HepG2 (cell line): ENCODE measurements at regions of chr11 and their contacts with region 1.

Region 1: DNA sequence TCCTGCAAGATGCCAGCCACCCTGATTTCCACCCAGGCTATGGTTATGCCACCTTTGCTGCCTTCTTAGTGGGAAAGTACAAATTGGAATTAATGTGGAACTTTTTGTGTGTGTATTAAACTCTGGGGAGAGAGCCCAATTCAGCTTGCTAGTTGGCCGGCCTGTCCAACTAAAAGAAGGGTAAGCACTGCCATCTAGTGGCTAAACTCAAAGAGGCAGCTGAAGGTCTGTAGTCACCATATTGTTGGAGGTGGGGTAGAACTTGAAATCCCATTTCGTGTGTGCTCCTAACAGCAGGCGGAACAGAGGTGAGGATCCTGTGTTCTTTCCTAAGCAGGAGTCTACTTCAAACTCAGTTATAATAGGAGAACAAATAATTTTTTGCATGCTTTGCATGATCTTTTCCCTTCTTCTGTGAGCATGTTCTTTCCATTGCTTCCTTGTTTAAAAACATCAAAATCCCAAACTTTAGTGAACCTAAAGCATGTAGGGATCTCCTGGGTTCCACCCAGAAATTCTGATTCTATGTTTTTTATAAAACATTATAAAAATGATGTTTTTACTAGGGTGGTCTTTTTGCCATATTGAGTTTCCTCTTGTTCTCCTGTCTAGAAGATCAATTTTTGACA is 138.8 kb upstream of the SORL1-AS1 start:
- DNase-seq: peak; percentile 59
- ATAC-seq: peak; percentile 82
- H3K4me3 ChIP-seq: no peak overlapping the region
- H3K27ac ChIP-seq: no peak overlapping the region
- H3K4me1 ChIP-seq: no peaks in the 10 kb centered on the region
- H3K27me3 ChIP-seq: no peaks in the 10 kb centered on the region
- CTCF ChIP-seq: peak; percentile 87
- EP300 ChIP-seq: no peak
- POLR2A ChIP-seq: no peak
- RAD21 ChIP-seq: peak; percentile 73

Region 2: GRCh38 chr11:121249039-121249663 is 342.4 kb before region 1 on chr11:
- CTCF ChIA-PET with region 1: interaction called, 10 read pairs
- POLR2A ChIA-PET with region 1: no interaction called
- in situ Hi-C with region 1: loop called (anchors 10 kb)
- intact Hi-C with region 1: loop called (anchors 2 kb)
- DNase-seq: peak; percentile 23
- ATAC-seq: peak; percentile 57
- H3K4me3 ChIP-seq: no peak overlapping the region
- H3K27ac ChIP-seq: no peak overlapping the region
- H3K4me1 ChIP-seq: no peaks in the 10 kb centered on the region
- H3K27me3 ChIP-seq: peaks cover 0 to 3% of the 10 kb centered on the region in 2 experiments; a peak in 2 of 5 replicates
- CTCF ChIP-seq: peak; percentile 59
- EP300 ChIP-seq: no peak
- POLR2A ChIP-seq: no peak
- RAD21 ChIP-seq: no peak

Region 3: DNA sequence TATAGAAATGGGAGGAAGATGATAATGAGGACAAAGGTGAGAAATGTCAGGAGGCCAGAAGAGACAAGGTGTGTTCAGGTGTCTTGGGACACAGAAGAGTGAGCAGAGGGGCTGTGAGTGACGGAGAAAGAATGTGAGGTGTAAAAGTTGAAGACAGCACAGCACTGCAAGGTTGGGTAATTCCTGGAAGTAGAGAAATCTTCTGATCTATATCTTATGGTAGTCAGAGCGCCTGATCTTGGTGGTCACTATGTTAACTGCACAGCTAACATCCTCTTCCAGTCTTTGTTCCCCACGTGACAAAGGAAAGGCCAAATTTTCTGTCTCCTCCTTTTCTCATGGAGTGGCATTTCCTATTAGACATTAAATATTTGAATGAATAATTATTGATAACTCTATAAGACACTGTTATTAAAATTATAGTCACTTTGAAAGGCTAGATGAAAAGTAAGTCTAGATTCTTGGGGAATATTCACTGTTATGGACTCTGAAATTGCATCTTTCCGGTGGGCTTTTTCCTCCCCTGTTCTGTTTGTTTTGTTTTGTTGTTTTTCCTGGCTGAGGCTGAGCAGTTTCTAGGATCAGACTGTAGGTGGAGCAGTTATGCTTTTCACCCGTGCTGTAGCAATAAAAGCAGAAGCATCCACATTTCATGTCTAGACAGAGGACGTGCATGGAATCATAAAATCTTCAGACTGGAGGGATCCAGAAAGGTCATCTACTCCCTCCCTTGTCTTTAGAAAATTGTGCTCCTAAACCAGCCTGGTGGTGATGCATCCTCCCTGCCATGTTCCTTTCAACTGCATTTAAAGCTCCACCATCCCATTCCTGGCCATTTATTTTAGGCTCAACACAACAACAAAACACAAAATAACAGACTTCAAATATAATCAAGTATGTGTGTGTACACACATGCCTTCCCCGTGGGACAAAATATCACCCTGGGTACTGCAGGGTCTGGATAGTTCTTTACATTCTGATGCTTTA is 272.4 kb before region 1 on chr11:
- CTCF ChIA-PET with region 1: interaction called, 27 read pairs
- POLR2A ChIA-PET with region 1: no interaction called
- in situ Hi-C with region 1: loop called (anchors 5 kb)
- intact Hi-C with region 1: loop called (anchors 1 kb)
- DNase-seq: peak; percentile 30
- ATAC-seq: peak; percentile 80
- H3K4me3 ChIP-seq: no peak overlapping the region
- H3K27ac ChIP-seq: no peak overlapping the region
- H3K4me1 ChIP-seq: no peaks in the 10 kb centered on the region
- H3K27me3 ChIP-seq: no peaks in the 10 kb centered on the region; a peak in 1 of 5 replicates
- CTCF ChIP-seq: peak; percentile 72
- EP300 ChIP-seq: no peak
- POLR2A ChIP-seq: no peak
- RAD21 ChIP-seq: peak; percentile 28; the same call in 1 of the 2 replicates

Region 4: DNA sequence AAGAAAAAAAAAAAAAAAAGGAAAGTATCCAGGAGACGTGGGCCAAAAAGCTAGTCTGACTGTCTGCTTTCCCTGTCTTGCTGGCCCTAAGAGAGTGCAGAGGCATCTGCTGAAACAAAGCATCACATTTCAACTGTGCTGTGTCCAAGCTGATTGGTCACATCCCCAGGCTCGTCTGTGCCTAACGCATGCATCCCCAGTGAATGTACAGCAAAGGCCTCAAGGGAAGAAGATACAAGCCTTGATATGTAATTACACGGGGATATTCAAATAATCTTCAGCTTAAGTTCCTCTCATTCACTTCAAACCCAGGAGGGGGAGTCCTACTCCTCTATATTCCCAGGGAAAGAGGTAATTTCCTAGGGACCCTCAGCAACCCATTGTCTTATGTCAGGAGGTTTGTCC is 144.8 kb before region 1 on chr11:
- CTCF ChIA-PET with region 1: interaction called, 4 read pairs
- POLR2A ChIA-PET with region 1: no interaction called
- in situ Hi-C with region 1: no loop called
- intact Hi-C with region 1: loop called (anchors 1 kb)
- DNase-seq: peak; percentile 27
- ATAC-seq: no peak
- H3K4me3 ChIP-seq: no peak overlapping the region
- H3K27ac ChIP-seq: no peak overlapping the region
- H3K4me1 ChIP-seq: peaks cover 60% of the 10 kb centered on the region
- H3K27me3 ChIP-seq: no peaks in the 10 kb centered on the region; a peak in 1 of 5 replicates
- CTCF ChIP-seq: peak; percentile 46
- EP300 ChIP-seq: no peak
- POLR2A ChIP-seq: no peak
- RAD21 ChIP-seq: no peak

Region 5: GRCh38 chr11:122505304-122506006 is 913.9 kb after region 1 on chr11:
- CTCF ChIA-PET with region 1: no interaction called
- POLR2A ChIA-PET with region 1: no interaction called
- in situ Hi-C with region 1: no loop called
- intact Hi-C with region 1: loop called (anchors 1 kb)
- DNase-seq: peak; percentile 42
- ATAC-seq: peak; percentile 99
- H3K4me3 ChIP-seq: no peak overlapping the region
- H3K27ac ChIP-seq: no peak overlapping the region
- H3K4me1 ChIP-seq: peaks cover 6% of the 10 kb centered on the region; the same call in 1 of the 2 replicates
- H3K27me3 ChIP-seq: no peaks in the 10 kb centered on the region; a peak in 1 of 5 replicates
- CTCF ChIP-seq: peak; percentile 93
- EP300 ChIP-seq: no peak
- POLR2A ChIP-seq: no peak
- RAD21 ChIP-seq: peak; percentile 85